ENCODE measurements at regions of chrX and their contacts with region 1.

Region 1: DNA sequence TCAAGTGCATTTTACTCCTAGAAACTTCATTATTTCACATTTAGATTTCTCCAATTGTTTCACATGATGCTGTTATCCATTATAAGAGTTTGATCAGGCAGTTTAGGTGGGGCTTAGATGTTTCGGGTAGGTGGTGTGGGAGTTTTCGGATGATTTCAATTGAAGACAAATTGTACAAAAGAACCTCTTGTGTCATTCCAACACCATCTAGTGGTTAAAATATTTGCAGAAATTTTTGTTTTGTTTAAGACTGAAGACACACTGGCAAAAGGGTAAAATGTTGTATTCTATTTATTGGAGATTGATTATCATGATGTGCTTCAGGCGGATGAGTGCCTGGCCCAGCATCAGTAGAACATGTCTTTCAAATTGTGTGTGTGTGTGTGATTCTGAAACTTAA is 212.7 kb downstream of the SH3BGRL start:
- DNase-seq: no peak
- H3K4me3 ChIP-seq: no peak overlapping the region
- H3K27ac ChIP-seq: no peak overlapping the region
- H3K4me1 ChIP-seq: no peaks in the 10 kb centered on the region
- H3K27me3 ChIP-seq: no peaks in the 10 kb centered on the region
- CTCF ChIP-seq: no peak
- POLR2A ChIP-seq: no peak

Region 2: GRCh38 chrX:80876877-80877276 is 537.8 kb before region 1 on chrX:
- intact Hi-C with region 1: loop called (anchors 5 kb)
- DNase-seq: no peak
- H3K4me3 ChIP-seq: no peak overlapping the region
- H3K27ac ChIP-seq: no peak overlapping the region
- H3K4me1 ChIP-seq: no peaks in the 10 kb centered on the region
- H3K27me3 ChIP-seq: no peaks in the 10 kb centered on the region
- CTCF ChIP-seq: peak in 2 of 4 experiments; percentile 17
- POLR2A ChIP-seq: no peak

Region 3: DNA sequence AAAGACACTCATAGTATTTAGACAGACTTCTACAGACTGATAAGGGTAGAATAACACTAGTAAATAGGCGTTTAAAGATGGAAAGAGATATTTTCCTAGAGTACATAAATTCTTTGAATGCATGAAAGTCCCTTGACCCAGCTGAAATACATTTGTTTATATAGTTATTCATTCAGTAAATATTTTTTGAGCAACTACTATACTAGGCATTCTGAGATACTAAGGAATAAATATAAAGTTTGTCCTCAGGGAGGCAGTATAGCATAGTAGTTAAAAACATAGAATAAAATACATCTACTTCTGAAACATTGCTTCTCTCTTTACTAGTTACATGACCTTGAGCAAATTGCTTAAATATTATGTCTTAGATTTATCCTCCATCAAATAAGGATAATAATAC is 240.3 kb before region 1 on chrX:
- intact Hi-C with region 1: loop called (anchors 10 kb)
- DNase-seq: no peak
- H3K4me3 ChIP-seq: no peak overlapping the region
- H3K27ac ChIP-seq: no peak overlapping the region
- H3K4me1 ChIP-seq: no peaks in the 10 kb centered on the region
- H3K27me3 ChIP-seq: no peaks in the 10 kb centered on the region
- CTCF ChIP-seq: peak in 2 of 4 experiments; percentile 21 to 33
- POLR2A ChIP-seq: no peak

Region 4: GRCh38 chrX:81355436-81355835 is 59.2 kb before region 1 on chrX:
- intact Hi-C with region 1: no loop called
- DNase-seq: no peak
- H3K4me3 ChIP-seq: no peak overlapping the region
- H3K27ac ChIP-seq: no peak overlapping the region
- H3K4me1 ChIP-seq: no peaks in the 10 kb centered on the region
- H3K27me3 ChIP-seq: no peaks in the 10 kb centered on the region
- CTCF ChIP-seq: no peak
- POLR2A ChIP-seq: no peak

Region 5: GRCh38 chrX:81377329-81377728 is 37.3 kb before region 1 on chrX:
- intact Hi-C with region 1: no loop called
- DNase-seq: no peak
- H3K4me3 ChIP-seq: no peak overlapping the region
- H3K27ac ChIP-seq: no peak overlapping the region
- H3K4me1 ChIP-seq: no peaks in the 10 kb centered on the region
- H3K27me3 ChIP-seq: no peaks in the 10 kb centered on the region
- CTCF ChIP-seq: peak in 3 of 4 experiments; percentile 38 to 47 (median 46)
- POLR2A ChIP-seq: no peak

Measured in prostate gland (tissue), 2 donors.